A673 (cell line): ENCODE measurements at regions of chr14 and their contacts with region 1.

Region 1: GRCh38 chr14:32252030-32252670 is 49.1 kb upstream of the RNU6-8 start:
- DNase-seq: peak; percentile 85
- H3K4me3 ChIP-seq: no peak overlapping the region
- H3K27ac ChIP-seq: no peak overlapping the region
- H3K4me1 ChIP-seq: no peaks in the 10 kb centered on the region
- H3K27me3 ChIP-seq: no peaks in the 10 kb centered on the region
- CTCF ChIP-seq: peak; percentile 90

Region 2: DNA sequence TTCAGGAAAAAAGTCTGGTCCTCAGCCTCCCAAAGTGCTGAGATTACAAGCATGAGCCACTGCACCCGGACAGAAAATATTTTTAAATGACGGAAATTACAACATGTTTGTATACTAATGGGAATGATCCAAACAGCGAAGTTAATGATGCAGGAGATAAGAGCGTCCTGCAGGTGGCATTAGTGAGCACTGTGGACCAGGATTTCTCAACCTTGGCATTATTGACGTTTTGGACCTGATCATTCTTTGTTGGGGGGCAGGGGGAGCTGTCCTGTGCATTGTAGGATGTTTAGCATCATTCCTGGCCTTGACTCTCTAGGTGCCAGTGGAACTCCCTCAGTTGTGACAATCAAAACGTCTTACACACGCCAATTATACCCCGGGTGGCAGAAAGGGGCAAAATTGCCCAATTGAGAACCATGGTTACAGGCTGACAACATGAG is 1595.9 kb before region 1 on chr14:
- CTCF ChIA-PET with region 1: no interaction called
- POLR2A ChIA-PET with region 1: no interaction called
- intact Hi-C with region 1: loop called (anchors 10 kb)
- DNase-seq: peak; percentile 52
- H3K4me3 ChIP-seq: no peak overlapping the region
- H3K27ac ChIP-seq: no peak overlapping the region
- H3K4me1 ChIP-seq: no peaks in the 10 kb centered on the region
- H3K27me3 ChIP-seq: no peaks in the 10 kb centered on the region
- CTCF ChIP-seq: peak; percentile 83

Region 3: DNA sequence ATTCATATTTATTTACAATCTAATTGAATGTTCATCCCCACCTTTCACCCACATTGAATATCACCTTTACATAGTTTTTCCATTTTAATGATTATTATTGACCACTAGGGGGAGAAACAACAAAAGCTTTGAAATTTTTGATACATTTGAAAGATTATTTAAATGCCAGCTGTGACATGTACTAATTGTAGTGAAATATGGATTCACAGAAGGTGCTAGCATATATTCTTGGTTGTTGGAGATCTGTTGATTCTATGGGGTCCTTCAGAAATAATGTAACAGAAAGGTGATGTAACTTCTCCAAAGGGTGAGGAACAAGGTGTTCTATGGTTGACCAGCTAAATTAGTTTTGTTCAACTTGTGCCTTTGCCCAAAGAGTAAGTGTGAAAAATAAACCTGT is 741.9 kb before region 1 on chr14:
- CTCF ChIA-PET with region 1: interaction called, 7 read pairs
- POLR2A ChIA-PET with region 1: no interaction called
- intact Hi-C with region 1: loop called (anchors 2 kb)
- DNase-seq: peak; percentile 38
- H3K4me3 ChIP-seq: no peak overlapping the region
- H3K27ac ChIP-seq: no peak overlapping the region
- H3K4me1 ChIP-seq: no peaks in the 10 kb centered on the region
- H3K27me3 ChIP-seq: no peaks in the 10 kb centered on the region
- CTCF ChIP-seq: peak; percentile 73

Region 4: DNA sequence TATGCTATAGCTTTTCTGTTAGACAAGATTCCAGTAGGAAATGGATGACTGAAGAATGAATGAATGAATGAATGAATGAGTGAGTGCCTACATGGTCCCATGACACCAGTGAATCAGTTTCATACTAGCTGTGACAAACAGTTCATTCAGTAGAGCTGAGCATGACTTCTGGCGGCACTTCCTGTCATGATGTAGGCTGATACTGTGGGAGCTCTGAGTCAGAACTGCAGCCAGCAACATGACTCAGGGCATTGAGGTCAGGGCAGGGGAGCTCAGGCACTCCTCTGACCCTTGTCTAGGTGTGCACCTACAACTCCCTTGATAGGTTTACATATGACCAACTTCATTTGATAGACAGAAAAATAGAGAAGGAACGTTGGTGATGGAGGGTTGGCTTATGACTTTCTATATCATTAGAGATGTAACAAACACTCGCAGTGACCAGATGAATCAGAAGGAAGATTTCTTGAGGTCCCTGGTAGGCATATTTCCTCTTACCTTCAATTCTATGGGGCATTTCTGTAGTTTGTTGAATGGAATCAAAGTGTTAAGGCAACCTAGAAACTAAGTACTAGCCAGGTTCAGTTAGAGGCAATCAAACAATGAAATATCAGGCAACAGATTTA is 314.3 kb before region 1 on chr14:
- CTCF ChIA-PET with region 1: interaction called, 4 read pairs
- POLR2A ChIA-PET with region 1: no interaction called
- intact Hi-C with region 1: loop called (anchors 2 kb)
- DNase-seq: peak; percentile 20
- H3K4me3 ChIP-seq: no peak overlapping the region
- H3K27ac ChIP-seq: no peak overlapping the region
- H3K4me1 ChIP-seq: peaks cover 11% of the 10 kb centered on the region
- H3K27me3 ChIP-seq: no peaks in the 10 kb centered on the region
- CTCF ChIP-seq: no peak

Region 5: DNA sequence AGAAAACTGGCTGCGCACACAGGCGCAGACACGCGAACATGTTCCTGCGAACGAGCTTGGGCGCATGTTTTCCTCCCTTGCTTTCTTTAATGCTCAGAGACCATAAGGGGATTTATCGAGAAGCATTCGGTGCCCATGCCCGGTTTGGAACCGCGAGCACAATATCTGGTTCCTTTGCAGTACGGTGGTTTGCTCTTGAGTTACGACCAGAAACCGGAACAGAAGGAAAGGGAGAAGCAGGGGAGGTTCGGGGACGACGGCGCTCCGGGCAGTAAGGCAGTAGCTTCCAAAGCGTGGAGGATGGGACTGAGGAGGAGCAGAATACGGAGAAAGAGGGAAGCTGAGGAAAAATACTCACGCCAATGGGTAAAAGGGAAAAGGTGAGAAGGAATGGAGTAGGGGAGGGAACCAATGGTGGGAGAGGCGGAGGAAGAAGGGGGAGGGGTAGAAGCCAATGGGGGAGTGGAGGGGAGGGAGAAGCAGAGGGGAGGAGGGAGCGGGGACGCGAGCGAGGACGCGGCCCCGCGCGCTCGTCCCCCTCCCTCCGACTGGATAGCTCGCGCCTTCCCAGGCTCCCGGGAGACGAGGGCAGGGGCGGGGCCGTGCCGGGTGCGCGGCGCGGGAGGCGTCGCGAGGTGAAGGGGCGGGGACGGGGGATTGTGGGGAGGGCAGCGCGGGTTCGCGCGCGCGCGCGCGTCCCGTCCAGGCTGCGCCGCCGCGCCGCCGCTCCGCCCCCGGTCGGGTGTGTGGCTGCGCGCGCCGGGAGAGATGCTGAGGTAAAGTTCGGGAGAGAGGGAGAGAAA is 175.7 kb before region 1 on chr14:
- CTCF ChIA-PET with region 1: interaction called, 8 read pairs
- POLR2A ChIA-PET with region 1: no interaction called
- intact Hi-C with region 1: loop called (anchors 1 kb)
- DNase-seq: peak; percentile 98
- H3K4me3 ChIP-seq: peak overlapping the region; percentile 88
- H3K27ac ChIP-seq: peak overlapping the region; percentile 85
- H3K4me1 ChIP-seq: peaks cover 12% of the 10 kb centered on the region
- H3K27me3 ChIP-seq: no peaks in the 10 kb centered on the region
- CTCF ChIP-seq: no peak

Region 6: DNA sequence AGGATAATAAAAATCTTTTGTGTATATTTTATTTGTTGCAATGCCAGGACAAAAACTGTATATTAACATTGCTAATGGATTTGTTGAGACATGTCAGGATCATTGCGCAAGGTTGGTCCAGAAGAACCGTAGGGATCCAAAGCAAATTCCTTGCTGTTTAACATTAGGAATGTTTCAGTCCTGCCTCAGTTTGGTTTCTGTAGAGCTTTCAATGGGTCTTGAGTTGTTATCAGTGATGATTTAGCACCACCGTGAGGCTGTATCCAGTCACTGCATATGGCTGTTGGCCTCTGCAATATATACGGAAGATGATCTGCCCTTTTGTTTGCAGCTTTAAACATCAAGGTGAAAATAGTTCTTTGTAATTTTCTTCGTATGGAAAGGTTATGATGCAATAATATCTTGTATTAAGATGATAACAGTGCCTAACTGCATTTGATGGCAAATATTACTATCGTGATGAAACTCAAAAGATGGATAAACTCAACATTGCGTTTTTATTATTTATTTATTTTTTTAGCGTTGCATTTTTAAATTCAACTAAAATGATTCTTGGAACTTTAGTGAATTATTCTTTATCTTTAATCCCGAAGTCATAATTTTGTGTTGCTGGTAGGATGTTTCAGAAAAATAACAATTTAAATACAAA is 308.2 kb after region 1 on chr14:
- CTCF ChIA-PET with region 1: interaction called, 14 read pairs
- POLR2A ChIA-PET with region 1: no interaction called
- intact Hi-C with region 1: no loop called
- DNase-seq: peak; percentile 79
- H3K4me3 ChIP-seq: no peak overlapping the region
- H3K27ac ChIP-seq: no peak overlapping the region
- H3K4me1 ChIP-seq: peaks cover 16% of the 10 kb centered on the region
- H3K27me3 ChIP-seq: no peaks in the 10 kb centered on the region
- CTCF ChIP-seq: peak; percentile 95